ENCODE measurements at regions of chr12 and their contacts with region 1.

Region 1: DNA sequence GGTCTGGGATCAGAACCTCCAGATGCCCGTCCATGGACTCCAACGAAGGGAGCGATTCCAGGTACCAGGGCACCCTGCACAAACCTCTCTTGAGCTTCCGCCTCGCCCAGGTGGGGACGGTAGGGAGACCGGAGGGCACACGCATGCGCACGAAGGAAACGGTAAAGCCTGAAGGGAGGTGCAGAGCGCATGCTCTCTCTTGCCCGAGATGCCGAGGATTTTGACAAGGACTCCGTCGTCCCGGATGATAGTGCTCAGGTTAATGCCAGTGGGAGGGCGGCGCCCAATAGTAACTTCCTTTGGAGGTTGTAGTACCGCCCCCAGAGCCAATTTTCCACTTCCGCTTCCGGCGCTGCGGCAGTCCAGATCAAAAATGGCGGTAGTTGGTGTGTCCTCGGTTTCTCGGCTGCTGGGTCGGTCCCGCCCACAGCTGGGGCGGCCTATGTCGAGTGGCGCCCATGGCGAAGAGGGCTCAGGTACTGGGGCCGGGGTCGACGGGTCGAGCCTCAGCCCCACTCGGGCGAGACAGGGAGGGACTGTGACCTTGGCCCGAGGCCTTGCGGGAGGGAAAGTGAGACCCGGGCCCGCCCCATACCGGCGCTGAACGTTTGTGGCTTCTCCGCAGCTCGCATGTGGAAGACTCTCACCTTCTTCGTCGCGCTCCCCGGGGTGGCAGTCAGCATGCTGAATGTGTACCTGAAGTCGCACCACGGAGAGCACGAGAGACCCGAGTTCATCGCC is at the start of gene COX6A1:
- DNase-seq: peak; percentile 99
- ATAC-seq: peak; percentile 97
- H3K4me3 Mint-ChIP-seq: peak within 1 kb of the TSS; percentile 99
- H3K27ac Mint-ChIP-seq: peak within 1 kb of the TSS; percentile 99
- H3K4me1 Mint-ChIP-seq: peaks cover 23% of the 10 kb centered on the region
- H3K27me3 Mint-ChIP-seq: peaks cover 4% of the 10 kb centered on the region
- total RNA-seq, gene COX6A1: 424 to 495 TPM

Region 2: DNA sequence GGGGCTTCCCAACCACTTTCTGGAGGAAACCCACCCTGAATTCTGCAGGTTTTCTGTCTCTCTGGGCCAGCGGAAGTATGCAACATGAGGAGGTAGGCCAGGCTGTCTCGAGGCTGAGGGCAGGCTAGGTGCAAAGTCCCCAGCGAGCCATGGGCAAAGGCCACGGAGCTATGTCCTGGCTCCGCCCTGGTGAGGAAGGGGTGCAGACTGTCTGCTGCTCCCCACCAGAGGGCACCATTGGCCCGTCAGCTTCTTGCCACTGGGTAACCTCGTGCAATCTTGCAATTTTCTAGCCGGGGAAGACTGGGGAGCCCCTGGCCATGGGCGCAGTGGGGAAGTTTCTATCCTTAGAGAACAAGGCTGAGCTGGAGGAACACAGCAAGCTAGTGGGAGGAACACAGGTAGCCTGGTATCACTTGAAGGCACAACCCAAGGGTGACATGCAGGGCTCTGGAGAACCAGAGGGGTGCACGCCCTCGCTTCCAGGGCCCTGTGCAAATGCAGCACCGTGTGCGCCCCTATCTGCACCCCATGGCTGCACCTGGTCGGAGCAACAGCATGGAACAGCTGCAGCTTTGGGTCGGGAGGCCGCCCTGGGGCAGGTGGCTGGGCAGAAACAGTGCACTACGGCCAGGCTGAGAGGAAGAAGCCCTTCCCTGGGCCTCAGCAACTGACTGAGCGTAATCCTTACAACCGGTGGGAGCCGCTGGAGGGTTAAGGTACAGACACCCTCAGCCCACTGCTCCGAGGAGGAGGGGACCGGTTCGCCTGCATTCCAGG is 209.4 kb before region 1 on chr12:
- CTCF ChIA-PET with region 1: interaction called, 3 read pairs
- POLR2A ChIA-PET with region 1: no interaction called
- intact Hi-C with region 1: loop called in 1 of 2 experiments (anchors 10 kb)
- DNase-seq: peak; percentile 96
- ATAC-seq: peak; percentile 65
- H3K4me3 Mint-ChIP-seq: peak overlapping the region; percentile 16
- H3K27ac Mint-ChIP-seq: peak overlapping the region; percentile 79
- H3K4me1 Mint-ChIP-seq: peaks cover 84% of the 10 kb centered on the region
- H3K27me3 Mint-ChIP-seq: no peaks in the 10 kb centered on the region

Region 3: GRCh38 chr12:120317224-120318105 is 120.5 kb before region 1 on chr12:
- CTCF ChIA-PET with region 1: interaction called, 9 read pairs
- POLR2A ChIA-PET with region 1: no interaction called
- intact Hi-C with region 1: loop called in 1 of 2 experiments (anchors 1 kb)
- DNase-seq: peak; percentile 100
- ATAC-seq: peak; percentile 100
- H3K4me3 Mint-ChIP-seq: peak overlapping the region; percentile 92
- H3K27ac Mint-ChIP-seq: peak overlapping the region; percentile 94
- H3K4me1 Mint-ChIP-seq: peaks cover 12% of the 10 kb centered on the region
- H3K27me3 Mint-ChIP-seq: no peaks in the 10 kb centered on the region

Region 4: DNA sequence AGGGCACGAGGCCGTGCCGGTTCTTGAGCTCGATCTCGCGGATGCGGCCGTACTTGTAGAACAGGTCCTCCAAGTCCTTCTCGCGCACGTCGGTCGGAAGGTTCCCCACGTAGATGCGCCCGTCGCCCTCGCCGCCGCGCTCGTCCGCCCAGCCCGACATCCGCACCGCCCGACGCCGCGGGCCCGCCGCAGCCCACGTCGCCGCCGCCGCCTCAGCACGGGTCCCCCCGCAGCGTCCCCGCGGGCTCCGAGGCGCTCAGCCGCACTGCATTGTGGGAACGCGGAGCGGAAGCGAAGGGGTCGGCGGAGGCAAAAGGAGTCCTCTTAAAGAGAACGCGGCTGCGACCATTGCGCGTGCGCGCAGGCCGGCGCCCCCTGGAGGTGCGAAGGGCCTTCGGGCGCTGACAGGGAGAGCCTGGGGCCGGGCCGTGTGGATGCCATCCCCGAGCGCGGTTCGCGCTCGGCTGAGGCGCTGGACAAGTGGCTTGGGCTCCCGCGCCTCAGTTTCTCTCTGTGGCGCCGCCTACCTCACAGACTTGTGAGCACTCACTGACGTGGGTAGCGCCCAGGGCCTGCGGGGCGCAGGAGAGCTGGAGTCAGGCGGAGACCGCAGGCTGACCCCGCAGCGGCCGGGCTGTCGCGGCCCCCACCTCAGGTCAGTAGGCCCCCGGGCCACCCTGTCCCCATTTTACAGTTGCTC is 31.7 kb after region 1 on chr12 and contains the start of gene SRSF9:
- CTCF ChIA-PET with region 1: interaction called, 10 read pairs
- POLR2A ChIA-PET with region 1: interaction called, 3 read pairs
- intact Hi-C with region 1: loop called (anchors 1 to 2 kb)
- DNase-seq: peak; percentile 98
- ATAC-seq: peak; percentile 94
- H3K4me3 Mint-ChIP-seq: peak within 1 kb of the TSS; percentile 79
- H3K27ac Mint-ChIP-seq: peak within 1 kb of the TSS; percentile 88
- H3K4me1 Mint-ChIP-seq: peaks cover 40% of the 10 kb centered on the region
- H3K27me3 Mint-ChIP-seq: no peaks in the 10 kb centered on the region
- total RNA-seq, gene SRSF9: 140 to 209 TPM

Region 5: GRCh38 chr12:120528861-120529525 is 91.1 kb after region 1 on chr12 and contains the start of gene COQ5:
- CTCF ChIA-PET with region 1: no interaction called
- POLR2A ChIA-PET with region 1: no interaction called
- intact Hi-C with region 1: loop called (anchors 1 kb)
- DNase-seq: peak; percentile 93
- ATAC-seq: peak; percentile 93
- H3K4me3 Mint-ChIP-seq: peak within 1 kb of the TSS; percentile 99
- H3K27ac Mint-ChIP-seq: peak within 1 kb of the TSS; percentile 100
- H3K4me1 Mint-ChIP-seq: peaks cover 21% of the 10 kb centered on the region
- H3K27me3 Mint-ChIP-seq: no peaks in the 10 kb centered on the region
- total RNA-seq, gene COQ5: 31.3 to 32.6 TPM

Region 6: GRCh38 chr12:120588948-120589930 is 151.3 kb after region 1 on chr12:
- CTCF ChIA-PET with region 1: no interaction called
- POLR2A ChIA-PET with region 1: no interaction called
- intact Hi-C with region 1: no loop called
- DNase-seq: no peak
- ATAC-seq: no peak
- H3K4me3 Mint-ChIP-seq: no peak overlapping the region
- H3K27ac Mint-ChIP-seq: no peak overlapping the region
- H3K4me1 Mint-ChIP-seq: peaks cover 1% of the 10 kb centered on the region
- H3K27me3 Mint-ChIP-seq: peaks cover 6% of the 10 kb centered on the region

Region 7: DNA sequence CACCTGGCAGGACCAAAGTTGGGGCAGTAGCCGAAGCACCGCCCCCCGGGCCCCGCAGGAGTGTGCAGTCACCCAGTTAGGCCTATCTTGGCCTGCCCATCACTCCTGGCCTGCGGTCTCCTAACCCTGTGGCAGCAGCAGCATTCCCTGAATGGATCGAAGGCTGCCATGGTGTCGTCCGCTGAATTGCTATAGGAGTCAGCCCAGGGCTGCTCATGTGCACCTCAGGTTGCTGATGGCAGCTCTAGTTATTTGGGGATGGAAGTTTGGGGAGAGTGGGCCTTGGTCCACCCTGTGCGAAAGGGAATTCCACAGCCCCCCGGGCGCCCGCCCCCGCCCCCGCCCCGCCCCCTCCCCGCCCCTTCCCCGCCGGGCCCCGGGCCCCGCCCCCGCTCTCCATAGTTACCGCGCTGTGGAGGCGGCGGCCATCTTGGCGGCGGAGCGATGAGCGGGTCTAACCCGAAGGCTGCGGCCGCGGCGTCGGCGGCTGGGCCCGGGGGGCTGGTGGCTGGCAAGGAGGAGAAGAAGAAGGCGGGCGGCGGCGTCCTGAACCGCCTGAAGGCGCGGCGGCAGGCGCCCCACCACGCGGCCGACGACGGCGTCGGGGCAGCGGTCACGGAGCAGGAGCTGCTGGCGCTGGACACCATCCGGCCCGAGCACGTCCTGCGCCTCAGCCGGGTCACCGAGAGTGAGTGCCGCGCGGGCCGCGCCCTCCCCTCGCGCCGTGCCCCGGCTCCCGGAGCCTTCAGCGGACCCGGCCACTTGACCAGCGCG is 272.3 kb after region 1 on chr12 and contains the start of gene UNC119B:
- CTCF ChIA-PET with region 1: no interaction called
- POLR2A ChIA-PET with region 1: no interaction called
- intact Hi-C with region 1: loop called in 1 of 2 experiments (anchors 5 kb)
- DNase-seq: peak; percentile 83
- ATAC-seq: peak; percentile 78
- H3K4me3 Mint-ChIP-seq: peak within 1 kb of the TSS; percentile 86
- H3K27ac Mint-ChIP-seq: peak within 1 kb of the TSS; percentile 82
- H3K4me1 Mint-ChIP-seq: peaks cover 34% of the 10 kb centered on the region
- H3K27me3 Mint-ChIP-seq: no peaks in the 10 kb centered on the region
- total RNA-seq, gene UNC119B: 20.1 to 26.6 TPM

Measured in activated CD4-positive, alpha-beta T cell treated with anti-CD3 and anti-CD28 coated beads for 36 hours (primary cell).